Endothelial cell of umbilical vein (primary cell): ENCODE measurements at regions of chr16 and their contacts with region 1.

Region 1: DNA sequence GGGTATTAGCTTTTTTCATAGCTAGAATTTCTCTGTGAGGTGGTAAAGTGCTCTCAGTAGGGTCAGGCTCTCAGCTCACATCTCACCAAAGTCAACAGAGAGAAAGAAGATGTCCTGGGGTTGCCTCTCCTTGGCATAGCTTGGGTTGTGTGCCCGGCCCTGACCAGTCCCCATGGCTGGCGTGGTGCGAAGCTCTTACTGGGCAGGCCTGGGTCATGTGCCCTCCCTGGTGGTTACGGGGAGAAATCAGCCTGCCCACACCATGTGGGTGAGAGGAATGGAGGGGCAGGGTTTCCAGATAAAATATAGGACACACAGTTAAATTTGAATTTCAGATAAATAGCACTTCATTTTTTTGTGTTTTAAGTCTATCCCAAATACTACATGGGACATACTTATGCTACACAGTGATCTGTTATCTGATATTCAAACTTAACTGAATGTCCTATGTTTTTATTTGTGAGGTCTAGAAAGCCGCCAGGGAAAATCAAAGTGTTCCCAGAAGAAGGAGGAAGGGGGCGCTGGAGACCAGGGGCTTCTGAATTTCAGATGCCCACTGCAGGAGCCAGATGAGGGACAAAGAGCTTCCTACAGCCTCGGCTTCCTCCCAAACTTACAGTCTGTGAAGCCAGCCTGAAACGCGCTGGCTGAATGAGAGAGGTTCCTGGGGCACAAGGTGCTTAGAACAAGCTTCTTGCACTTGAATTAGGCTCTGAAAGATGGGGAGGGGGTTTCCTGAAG is 45.4 kb downstream of the NKD1 start:
- DNase-seq: peak; percentile 24
- H3K4me3 ChIP-seq: no peak overlapping the region
- H3K27ac ChIP-seq: no peak overlapping the region
- H3K4me1 ChIP-seq: no peaks in the 10 kb centered on the region
- H3K27me3 ChIP-seq: no peaks in the 10 kb centered on the region
- CTCF ChIP-seq: peak; percentile 16 to 37
- POLR2A ChIP-seq: no peak

Region 2: GRCh38 chr16:50397196-50397595 is 196.4 kb before region 1 on chr16:
- CTCF ChIA-PET with region 1: no interaction called
- POLR2A ChIA-PET with region 1: no interaction called
- dilution Hi-C with region 1: no loop called
- intact Hi-C with region 1: no loop called
- DNase-seq: no peak
- H3K4me3 ChIP-seq: no peak overlapping the region
- H3K27ac ChIP-seq: no peak overlapping the region
- H3K4me1 ChIP-seq: no peaks in the 10 kb centered on the region
- H3K27me3 ChIP-seq: no peaks in the 10 kb centered on the region
- CTCF ChIP-seq: no peak
- POLR2A ChIP-seq: no peak

Region 3: GRCh38 chr16:50644729-50645128 is 51.1 kb after region 1 on chr16:
- CTCF ChIA-PET with region 1: interaction called, 13 read pairs
- POLR2A ChIA-PET with region 1: no interaction called
- dilution Hi-C with region 1: no loop called
- intact Hi-C with region 1: no loop called
- DNase-seq: no peak
- H3K4me3 ChIP-seq: no peak overlapping the region
- H3K27ac ChIP-seq: no peak overlapping the region
- H3K4me1 ChIP-seq: no peaks in the 10 kb centered on the region
- H3K27me3 ChIP-seq: no peaks in the 10 kb centered on the region
- CTCF ChIP-seq: no peak
- POLR2A ChIP-seq: no peak